Activated naive CD4-positive, alpha-beta T cell treated with anti-CD3 and anti-CD28 coated beads for 36 hours (primary cell): ENCODE measurements at regions of chrX and their contacts with region 1.

Region 1: GRCh38 chrX:20530406-20530921 is 263.8 kb upstream of the RPS6KA3 start:
- DNase-seq: peak; percentile 69
- H3K4me3 Mint-ChIP-seq: no peak overlapping the region
- H3K27ac Mint-ChIP-seq: no peak overlapping the region
- H3K4me1 Mint-ChIP-seq: peaks cover 2% of the 10 kb centered on the region
- H3K27me3 Mint-ChIP-seq: peaks cover 14% of the 10 kb centered on the region

Region 2: DNA sequence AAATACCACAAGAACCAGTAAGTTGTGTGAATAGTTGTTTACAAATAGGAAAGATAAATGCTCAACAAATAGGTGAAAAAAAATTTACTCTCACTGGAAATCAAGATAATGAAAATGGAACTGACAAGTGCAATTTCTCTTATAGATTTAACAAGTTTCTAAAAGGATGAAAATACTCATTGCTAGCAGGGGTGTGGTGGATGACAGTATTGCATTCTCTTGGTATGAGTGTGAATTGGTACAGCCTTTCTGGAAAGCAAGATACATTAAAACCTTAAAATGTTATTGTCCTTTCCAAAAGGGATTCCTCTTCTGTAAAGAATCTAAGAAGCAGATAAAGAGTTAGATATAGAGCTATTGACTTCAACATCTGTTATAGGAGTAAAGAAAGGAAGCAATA is 23.7 kb before region 1 on chrX:
- CTCF ChIA-PET with region 1: no interaction called
- intact Hi-C with region 1: no loop called
- DNase-seq: no peak
- H3K4me3 Mint-ChIP-seq: no peak overlapping the region
- H3K27ac Mint-ChIP-seq: no peak overlapping the region
- H3K4me1 Mint-ChIP-seq: peaks cover 6% of the 10 kb centered on the region
- H3K27me3 Mint-ChIP-seq: peaks cover 9% of the 10 kb centered on the region

Region 3: GRCh38 chrX:20594985-20595384 is 64.5 kb after region 1 on chrX:
- CTCF ChIA-PET with region 1: no interaction called
- intact Hi-C with region 1: loop called (anchors 5 kb)
- DNase-seq: no peak
- H3K4me3 Mint-ChIP-seq: no peak overlapping the region
- H3K27ac Mint-ChIP-seq: no peak overlapping the region
- H3K4me1 Mint-ChIP-seq: peaks cover 12% of the 10 kb centered on the region
- H3K27me3 Mint-ChIP-seq: no peaks in the 10 kb centered on the region

Region 4: GRCh38 chrX:20663336-20663735 is 132.9 kb after region 1 on chrX:
- CTCF ChIA-PET with region 1: no interaction called
- intact Hi-C with region 1: no loop called
- DNase-seq: no peak
- H3K4me3 Mint-ChIP-seq: no peak overlapping the region
- H3K27ac Mint-ChIP-seq: no peak overlapping the region
- H3K4me1 Mint-ChIP-seq: no peaks in the 10 kb centered on the region
- H3K27me3 Mint-ChIP-seq: no peaks in the 10 kb centered on the region

Region 5: GRCh38 chrX:21374163-21374993 is 843.9 kb after region 1 on chrX and contains the start of gene CNKSR2:
- CTCF ChIA-PET with region 1: no interaction called
- intact Hi-C with region 1: loop called (anchors 2 kb)
- DNase-seq: peak; percentile 63
- H3K4me3 Mint-ChIP-seq: peak within 1 kb of the TSS; percentile 92
- H3K27ac Mint-ChIP-seq: peak within 1 kb of the TSS; percentile 61
- H3K4me1 Mint-ChIP-seq: peaks cover 28% of the 10 kb centered on the region
- H3K27me3 Mint-ChIP-seq: no peaks in the 10 kb centered on the region
- total RNA-seq, gene CNKSR2: 6.6 to 8.4 TPM

Region 6: GRCh38 chrX:21725496-21725895 is 1195.0 kb after region 1 on chrX:
- CTCF ChIA-PET with region 1: interaction called, 5 read pairs
- intact Hi-C with region 1: loop called (anchors 5 kb)
- DNase-seq: no peak
- H3K4me3 Mint-ChIP-seq: no peak overlapping the region
- H3K27ac Mint-ChIP-seq: no peak overlapping the region
- H3K4me1 Mint-ChIP-seq: no peaks in the 10 kb centered on the region
- H3K27me3 Mint-ChIP-seq: peaks cover 4% of the 10 kb centered on the region

Region 7: GRCh38 chrX:21972721-21973120 is 1442.3 kb after region 1 on chrX:
- CTCF ChIA-PET with region 1: no interaction called
- intact Hi-C with region 1: loop called (anchors 10 kb)
- DNase-seq: peak; percentile 64
- H3K4me3 Mint-ChIP-seq: no peak overlapping the region
- H3K27ac Mint-ChIP-seq: peak overlapping the region; percentile 87
- H3K4me1 Mint-ChIP-seq: peaks cover 35% of the 10 kb centered on the region
- H3K27me3 Mint-ChIP-seq: no peaks in the 10 kb centered on the region